ENCODE measurements at regions of chr11 and their contacts with region 1.

Region 1: GRCh38 chr11:87176044-87176443 is 138.3 kb downstream of the TMEM135 start:
- DNase-seq: no peak
- ATAC-seq: no peak
- H3K4me3 ChIP-seq: no peak overlapping the region
- H3K27ac ChIP-seq: no peak overlapping the region
- H3K4me1 ChIP-seq: peaks cover 0 to 23% (median 14%) of the 10 kb centered on the region in 12 donors
- H3K27me3 ChIP-seq: no peaks in the 10 kb centered on the region
- CTCF ChIP-seq: no peak
- POLR2A ChIP-seq: no peak

Region 2: DNA sequence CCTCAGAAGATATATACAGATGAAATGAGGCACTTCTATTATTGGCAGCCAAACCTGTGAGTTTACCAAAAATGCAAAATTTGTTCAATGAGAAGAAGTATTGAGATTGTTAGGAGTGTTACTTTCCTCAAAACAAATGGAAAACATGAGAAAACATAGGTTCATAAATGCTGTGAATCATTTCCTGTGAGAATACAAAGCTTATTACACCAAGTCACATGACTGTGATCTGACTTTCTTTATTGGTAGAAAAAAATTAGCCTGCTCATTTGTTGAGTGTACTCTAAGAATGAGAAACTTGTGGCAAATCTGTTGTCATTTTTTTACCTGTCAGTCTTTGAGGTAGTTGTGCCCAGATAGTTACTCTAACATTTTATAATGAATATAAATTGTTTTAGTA is 76.8 kb after region 1 on chr11:
- intact Hi-C with region 1: loop called in 1 of 10 experiments (anchors 5 kb)
- DNase-seq: no peak
- ATAC-seq: no peak
- H3K4me3 ChIP-seq: no peak overlapping the region
- H3K27ac ChIP-seq: no peak overlapping the region
- H3K4me1 ChIP-seq: peaks cover 0 to 15% (median 0%) of the 10 kb centered on the region in 12 donors
- H3K27me3 ChIP-seq: no peaks in the 10 kb centered on the region
- CTCF ChIP-seq: no peak
- POLR2A ChIP-seq: no peak